ENCODE measurements at regions of chr21 and their contacts with region 1.

Region 1: DNA sequence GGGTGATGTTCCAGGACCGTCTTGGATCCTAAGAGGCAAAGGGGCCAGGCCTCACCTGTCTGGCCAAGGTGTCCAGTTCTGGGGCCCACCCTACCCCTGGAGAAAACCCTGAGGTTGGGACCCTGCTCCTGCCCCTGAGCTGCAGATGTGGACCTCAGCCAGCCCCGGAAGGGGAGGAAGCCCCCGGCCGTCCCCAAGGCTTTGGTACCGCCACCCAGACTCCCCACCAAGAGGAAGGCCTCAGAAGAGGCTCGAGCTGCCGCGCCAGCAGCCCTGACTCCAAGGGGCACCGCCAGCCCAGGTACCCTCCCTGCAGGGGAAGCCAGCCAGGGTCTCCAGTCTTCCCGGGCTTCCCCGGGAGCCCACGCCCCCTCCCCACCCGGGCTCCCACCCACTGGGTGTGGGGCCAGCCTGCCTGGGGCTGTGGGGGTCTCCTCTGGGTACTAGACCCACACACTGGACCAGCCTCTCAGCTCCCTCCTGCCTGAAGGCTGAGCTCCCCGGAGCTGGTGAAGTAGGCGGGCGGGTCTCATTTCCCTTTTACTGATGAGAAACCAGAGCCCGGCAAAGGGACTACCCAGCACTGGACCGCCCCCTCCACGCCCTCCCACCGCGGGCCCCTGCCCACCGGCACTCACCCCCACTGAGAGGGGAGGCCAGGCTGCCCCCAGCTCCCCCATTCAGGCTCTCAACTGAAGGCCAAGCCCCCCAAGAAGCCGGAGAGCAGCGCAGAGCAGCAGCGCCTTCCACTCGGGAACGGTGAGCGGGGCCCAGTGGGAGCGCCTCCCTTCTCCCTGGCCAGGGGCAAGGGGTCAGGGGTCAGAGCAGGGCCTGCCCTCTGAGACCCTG is 1.4 kb downstream of the AIRE start:
- DNase-seq: no peak
- H3K4me3 ChIP-seq: no peak overlapping the region
- H3K27ac ChIP-seq: no peak overlapping the region
- H3K4me1 ChIP-seq: no peaks in the 10 kb centered on the region
- H3K27me3 ChIP-seq: peaks cover 0 to 3% of the 10 kb centered on the region in 2 experiments
- CTCF ChIP-seq: no peak
- POLR2A ChIP-seq: no peak

Region 2: DNA sequence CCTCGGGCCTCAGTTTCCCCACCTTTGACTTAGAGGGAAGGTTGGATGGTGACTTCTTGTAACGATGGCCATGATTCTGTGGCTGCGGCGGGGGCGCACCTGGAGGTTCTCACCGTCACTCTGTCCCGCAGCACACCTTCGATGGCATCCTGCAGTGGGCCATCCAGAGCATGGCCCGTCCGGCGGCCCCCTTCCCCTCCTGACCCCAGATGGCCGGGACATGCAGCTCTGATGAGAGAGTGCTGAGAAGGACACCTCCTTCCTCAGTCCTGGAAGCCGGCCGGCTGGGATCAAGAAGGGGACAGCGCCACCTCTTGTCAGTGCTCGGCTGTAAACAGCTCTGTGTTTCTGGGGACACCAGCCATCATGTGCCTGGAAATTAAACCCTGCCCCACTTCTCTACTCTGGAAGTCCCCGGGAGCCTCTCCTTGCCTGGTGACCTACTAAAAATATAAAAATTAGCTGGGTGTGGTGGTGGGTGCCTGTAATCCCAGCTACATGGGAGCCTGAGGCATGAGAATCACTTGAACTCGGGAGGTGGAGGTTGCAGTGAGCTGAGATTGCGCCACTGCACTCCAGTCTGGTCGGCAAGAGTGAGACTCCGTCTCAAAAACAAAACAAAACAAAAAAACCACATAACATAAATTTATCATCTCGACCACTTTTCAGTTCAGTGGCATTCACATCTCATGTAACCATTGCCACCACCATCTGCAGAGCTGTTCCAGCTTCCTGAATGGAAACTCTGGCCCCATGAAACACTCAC is 10.7 kb after region 1 on chr21:
- CTCF ChIA-PET with region 1: interaction called, 11 read pairs
- POLR2A ChIA-PET with region 1: interaction called, 3 read pairs
- dilution Hi-C with region 1: no loop called
- intact Hi-C with region 1: no loop called
- DNase-seq: peak; percentile 78
- H3K4me3 ChIP-seq: no peak overlapping the region
- H3K27ac ChIP-seq: no peak overlapping the region
- H3K4me1 ChIP-seq: peaks cover 12% of the 10 kb centered on the region
- H3K27me3 ChIP-seq: no peaks in the 10 kb centered on the region
- CTCF ChIP-seq: peak; percentile 74 to 87
- POLR2A ChIP-seq: no peak